PC-9 (cell line): ENCODE measurements at regions of chr1 and their contacts with region 1.

Region 1: DNA sequence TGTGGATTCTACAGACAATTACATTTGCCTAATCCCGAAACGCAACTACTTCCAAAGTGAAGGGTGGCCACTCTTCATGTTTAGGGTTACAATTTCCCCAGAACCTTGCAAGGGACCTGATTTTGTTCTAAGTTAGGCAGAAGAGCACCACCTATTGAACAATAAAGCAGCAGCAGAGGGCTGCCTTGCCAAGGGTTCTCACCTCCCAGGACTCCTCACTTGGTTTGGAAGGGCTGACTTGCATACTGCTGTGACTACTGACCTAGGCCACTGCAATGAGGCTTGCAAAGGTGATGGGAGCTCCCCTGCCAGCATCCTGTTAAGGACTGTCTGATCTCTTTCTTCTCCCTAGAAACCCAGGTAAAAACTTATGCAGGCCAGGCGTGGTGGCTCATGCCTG is 14.2 kb downstream of the MTOR start:
- DNase-seq: no peak
- H3K4me3 ChIP-seq: no peak overlapping the region
- H3K27ac ChIP-seq: no peak overlapping the region
- H3K4me1 ChIP-seq: no peaks in the 10 kb centered on the region
- H3K27me3 ChIP-seq: no peaks in the 10 kb centered on the region
- CTCF ChIP-seq: no peak

Region 2: DNA sequence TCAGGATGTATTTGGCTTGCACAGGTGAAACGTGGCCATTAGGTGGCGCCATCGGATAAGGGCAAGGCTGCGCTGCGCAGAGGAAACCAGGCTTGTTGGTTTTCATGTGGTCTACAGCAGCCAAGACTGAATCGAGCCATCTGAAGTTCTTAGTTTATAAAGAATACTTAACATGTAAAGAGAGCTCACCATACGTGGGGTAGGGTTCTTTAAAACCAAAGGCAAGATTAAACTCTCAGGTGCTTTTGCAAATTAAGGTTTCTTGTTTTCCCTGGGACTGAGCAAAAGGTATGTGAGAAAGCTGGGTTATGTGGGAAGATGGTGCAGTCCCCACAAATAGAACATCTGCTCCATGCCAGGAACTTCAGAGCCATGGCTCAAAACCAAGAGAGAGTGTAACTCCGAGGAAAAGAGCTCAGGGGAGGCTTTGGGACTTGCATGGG is 210.4 kb before region 1 on chr1:
- CTCF ChIA-PET with region 1: no interaction called
- POLR2A ChIA-PET with region 1: no interaction called
- intact Hi-C with region 1: loop called (anchors 10 kb)
- DNase-seq: peak; percentile 45 to 75
- H3K4me3 ChIP-seq: no peak overlapping the region
- H3K27ac ChIP-seq: no peak overlapping the region
- H3K4me1 ChIP-seq: no peaks in the 10 kb centered on the region
- H3K27me3 ChIP-seq: no peaks in the 10 kb centered on the region
- CTCF ChIP-seq: peak; percentile 89

Region 3: DNA sequence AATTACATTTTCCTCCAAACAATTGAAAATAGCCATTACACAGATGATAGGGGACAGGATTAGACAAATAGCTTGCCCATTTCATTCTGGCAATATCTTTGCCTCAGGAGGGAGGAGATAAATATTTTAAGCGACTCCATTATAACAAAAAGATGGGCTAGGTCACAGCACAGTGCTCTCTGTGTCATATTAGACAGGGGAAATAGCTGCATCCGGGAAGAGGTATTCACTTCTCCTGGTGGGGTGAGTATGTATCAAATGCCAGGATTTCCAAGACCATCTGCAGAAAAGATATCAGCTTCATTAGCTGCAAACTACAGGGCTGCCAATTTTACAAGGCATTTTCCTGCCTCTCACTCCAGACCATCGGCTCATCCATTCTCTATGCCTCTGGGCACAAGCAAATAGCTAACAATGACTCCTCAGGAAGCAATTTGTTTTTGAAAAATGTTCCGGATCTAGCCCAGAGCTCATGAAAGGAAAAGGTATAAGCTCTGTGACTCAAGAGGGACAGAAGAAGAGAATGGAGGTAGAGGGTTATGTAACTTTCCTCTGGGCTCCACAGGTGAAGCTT is 100.9 kb before region 1 on chr1:
- CTCF ChIA-PET with region 1: no interaction called
- POLR2A ChIA-PET with region 1: no interaction called
- intact Hi-C with region 1: no loop called
- DNase-seq: peak in 1 of 2 experiments; percentile 86
- H3K4me3 ChIP-seq: no peak overlapping the region
- H3K27ac ChIP-seq: peak overlapping the region; percentile 65
- H3K4me1 ChIP-seq: peaks cover 14% of the 10 kb centered on the region
- H3K27me3 ChIP-seq: no peaks in the 10 kb centered on the region
- CTCF ChIP-seq: no peak

Region 4: DNA sequence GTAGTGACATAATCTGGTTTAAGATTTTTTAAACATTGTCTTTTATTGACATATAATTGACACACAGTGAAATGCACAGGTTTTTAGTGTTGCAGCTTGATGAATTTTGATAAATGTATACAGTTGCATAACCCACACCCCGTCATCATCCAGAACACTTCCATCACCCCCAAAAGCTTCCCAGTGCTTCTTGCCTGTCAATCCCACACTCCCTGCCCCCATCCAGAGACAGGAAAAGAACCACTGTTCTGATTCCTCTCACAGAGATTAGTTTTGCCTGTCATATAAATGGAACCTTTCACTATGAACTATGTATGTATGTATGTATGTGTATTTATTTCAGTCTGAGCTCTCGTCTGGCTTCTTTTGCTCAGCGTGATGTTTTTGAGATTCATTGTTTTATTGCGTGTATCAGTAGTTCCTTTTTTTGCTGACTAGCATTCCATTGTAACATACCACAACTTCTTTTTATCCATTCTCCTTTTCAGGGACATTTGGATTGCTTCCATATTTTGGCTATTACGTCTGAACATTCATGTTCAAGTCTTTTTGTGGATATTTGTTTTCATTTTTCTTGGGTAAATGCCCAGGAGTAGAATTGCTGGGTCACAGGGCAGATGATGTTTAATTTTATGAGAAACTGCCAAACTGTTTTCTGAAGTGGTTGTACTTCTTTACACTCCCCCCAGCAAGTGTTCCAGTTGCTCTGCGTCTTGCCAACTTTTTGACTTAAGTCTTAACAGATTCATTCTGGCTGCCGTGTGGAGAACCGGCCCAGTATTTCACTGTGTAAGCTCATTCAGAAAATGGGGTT is 33.6 kb after region 1 on chr1:
- CTCF ChIA-PET with region 1: no interaction called
- POLR2A ChIA-PET with region 1: no interaction called
- intact Hi-C with region 1: no loop called
- DNase-seq: no peak
- H3K4me3 ChIP-seq: no peak overlapping the region
- H3K27ac ChIP-seq: no peak overlapping the region
- H3K4me1 ChIP-seq: no peaks in the 10 kb centered on the region
- H3K27me3 ChIP-seq: no peaks in the 10 kb centered on the region
- CTCF ChIP-seq: no peak

Region 5: GRCh38 chr1:11719313-11720032 is 471.3 kb after region 1 on chr1:
- CTCF ChIA-PET with region 1: no interaction called
- POLR2A ChIA-PET with region 1: no interaction called
- intact Hi-C with region 1: loop called (anchors 5 kb)
- DNase-seq: peak in 1 of 2 experiments; percentile 62
- H3K4me3 ChIP-seq: no peak overlapping the region
- H3K27ac ChIP-seq: no peak overlapping the region
- H3K4me1 ChIP-seq: no peaks in the 10 kb centered on the region
- H3K27me3 ChIP-seq: peaks cover 12% of the 10 kb centered on the region
- CTCF ChIP-seq: peak; percentile 92